Activated CD8-positive, alpha-beta T cell treated with anti-CD3 and anti-CD28 coated beads for 36 hours (primary cell): ENCODE measurements at regions of chr5 and their contacts with region 1.

Region 1: DNA sequence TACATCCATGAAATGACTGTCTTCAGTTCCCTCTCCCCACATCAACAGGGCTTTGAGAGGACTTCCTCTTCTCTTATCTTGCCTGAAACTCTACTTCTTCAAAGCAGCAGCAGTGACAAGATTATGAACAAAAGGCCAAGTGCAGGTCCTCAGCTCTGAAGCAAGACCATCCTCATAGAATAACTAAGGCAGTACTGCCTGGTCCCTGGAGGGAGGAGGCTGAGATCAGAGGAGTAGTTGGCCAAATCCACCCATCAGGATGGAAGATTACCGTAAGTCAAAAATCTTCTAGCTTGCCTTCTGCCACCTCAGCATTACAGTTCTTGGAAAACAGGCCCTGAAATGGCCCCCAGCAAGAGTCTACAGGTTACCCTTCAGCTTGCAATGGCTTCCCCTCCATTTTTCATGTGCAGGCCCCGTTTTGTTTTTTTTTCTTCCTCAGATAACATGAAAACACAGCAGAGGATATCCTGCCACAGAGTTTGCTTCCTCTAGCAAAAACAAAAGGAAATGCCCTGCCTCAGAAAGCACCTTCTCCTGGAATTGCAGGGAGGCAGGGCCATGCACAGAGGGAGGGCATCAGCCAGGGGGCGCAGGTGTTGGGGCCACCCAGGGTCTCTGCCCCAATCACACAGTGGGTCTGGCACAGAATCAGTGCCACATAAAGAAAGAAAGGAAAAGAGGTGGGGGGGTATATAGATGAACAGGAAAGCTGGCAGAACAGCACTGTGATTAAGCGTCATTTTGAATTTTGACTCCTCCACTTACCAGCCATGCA is 40.0 kb downstream of the KLHL3 start:
- DNase-seq: peak; percentile 15
- ATAC-seq: peak; percentile 53
- H3K4me3 Mint-ChIP-seq: peak overlapping the region; percentile 39
- H3K27ac Mint-ChIP-seq: peak overlapping the region; percentile 92
- H3K4me1 Mint-ChIP-seq: peaks cover 40% of the 10 kb centered on the region
- H3K27me3 Mint-ChIP-seq: no peaks in the 10 kb centered on the region
- CTCF ChIP-seq: peak; percentile 26

Region 2: GRCh38 chr5:137665678-137666460 is 30.0 kb before region 1 on chr5:
- CTCF ChIA-PET with region 1: interaction called, 35 read pairs
- POLR2A ChIA-PET with region 1: no interaction called
- intact Hi-C with region 1: no loop called
- DNase-seq: peak; percentile 71
- ATAC-seq: peak; percentile 99
- H3K4me3 Mint-ChIP-seq: no peak overlapping the region
- H3K27ac Mint-ChIP-seq: peak overlapping the region; percentile 76
- H3K4me1 Mint-ChIP-seq: peaks cover 26% of the 10 kb centered on the region
- H3K27me3 Mint-ChIP-seq: no peaks in the 10 kb centered on the region
- CTCF ChIP-seq: no peak

Region 3: GRCh38 chr5:137954131-137954879 is 258.5 kb after region 1 on chr5:
- CTCF ChIA-PET with region 1: no interaction called
- POLR2A ChIA-PET with region 1: no interaction called
- intact Hi-C with region 1: no loop called
- DNase-seq: no peak
- ATAC-seq: no peak
- H3K4me3 Mint-ChIP-seq: no peak overlapping the region
- H3K27ac Mint-ChIP-seq: no peak overlapping the region
- H3K4me1 Mint-ChIP-seq: no peaks in the 10 kb centered on the region
- H3K27me3 Mint-ChIP-seq: no peaks in the 10 kb centered on the region
- CTCF ChIP-seq: no peak